ENCODE measurements at regions of chr4 and their contacts with region 1.

Region 1: GRCh38 chr4:80049813-80050534 is 23.1 kb downstream of the ANTXR2 start:
- DNase-seq: no peak
- ATAC-seq: no peak
- H3K4me3 ChIP-seq: no peak overlapping the region
- H3K4me3 Mint-ChIP-seq: no peak overlapping the region
- H3K27ac ChIP-seq: no peak overlapping the region
- H3K27ac Mint-ChIP-seq: no peak overlapping the region
- H3K4me1 ChIP-seq: no peaks in the 10 kb centered on the region
- H3K4me1 Mint-ChIP-seq: peaks cover 7 to 21% (median 16%) of the 10 kb centered on the region in 7 donors
- H3K27me3 ChIP-seq: no peaks in the 10 kb centered on the region
- H3K27me3 Mint-ChIP-seq: no peaks in the 10 kb centered on the region

Region 2: DNA sequence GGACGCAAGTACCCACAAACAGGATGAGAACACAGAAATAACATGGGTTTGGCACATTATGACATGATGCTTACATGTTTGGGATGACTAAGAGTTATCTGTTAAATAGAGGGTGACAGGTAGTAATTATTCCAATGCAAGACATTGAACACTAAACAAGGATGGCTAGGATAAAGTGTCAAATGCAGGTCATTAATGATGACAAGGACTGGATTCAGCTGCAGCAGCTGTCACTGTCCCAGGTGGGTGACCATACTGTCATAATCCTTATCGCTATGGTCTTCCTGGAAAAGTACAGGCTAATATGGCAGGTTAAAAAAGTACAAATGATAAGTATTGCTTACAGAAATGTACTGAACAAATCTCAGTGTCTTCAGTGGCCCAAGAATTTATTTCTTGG is 100.8 kb before region 1 on chr4:
- CTCF ChIA-PET with region 1: no interaction called
- POLR2A ChIA-PET with region 1: no interaction called
- intact Hi-C with region 1: no loop called
- DNase-seq: no peak
- ATAC-seq: no peak
- H3K4me3 ChIP-seq: no peak overlapping the region
- H3K4me3 Mint-ChIP-seq: no peak overlapping the region
- H3K27ac ChIP-seq: no peak overlapping the region
- H3K27ac Mint-ChIP-seq: no peak overlapping the region
- H3K4me1 ChIP-seq: no peaks in the 10 kb centered on the region
- H3K4me1 Mint-ChIP-seq: peaks cover 0 to 17% (median 12%) of the 10 kb centered on the region in 7 donors
- H3K27me3 ChIP-seq: no peaks in the 10 kb centered on the region
- H3K27me3 Mint-ChIP-seq: no peaks in the 10 kb centered on the region

Region 3: GRCh38 chr4:80036949-80037685 is 12.9 kb before region 1 on chr4:
- CTCF ChIA-PET with region 1: no interaction called
- POLR2A ChIA-PET with region 1: interaction called, 3 read pairs
- intact Hi-C with region 1: loop called in 1 of 2 experiments (anchors 1 kb)
- DNase-seq: peak in 1 of 9 donors; percentile 5
- ATAC-seq: peak; percentile 20
- H3K4me3 ChIP-seq: no peak overlapping the region
- H3K4me3 Mint-ChIP-seq: peak overlapping the region; percentile 47 to 89 (median 68)
- H3K27ac ChIP-seq: peak overlapping the region; percentile 50
- H3K27ac Mint-ChIP-seq: peak overlapping the region; percentile 57 to 96 (median 82)
- H3K4me1 ChIP-seq: peaks cover 0 to 7% of the 10 kb centered on the region in 2 donors
- H3K4me1 Mint-ChIP-seq: peaks cover 6 to 40% (median 35%) of the 10 kb centered on the region in 7 donors
- H3K27me3 ChIP-seq: no peaks in the 10 kb centered on the region
- H3K27me3 Mint-ChIP-seq: no peaks in the 10 kb centered on the region

Measured in naive thymus-derived CD4-positive, alpha-beta T cell (primary cell).